MCF 10A (cell line): ENCODE measurements at regions of chr7 and their contacts with region 1.

Region 1: DNA sequence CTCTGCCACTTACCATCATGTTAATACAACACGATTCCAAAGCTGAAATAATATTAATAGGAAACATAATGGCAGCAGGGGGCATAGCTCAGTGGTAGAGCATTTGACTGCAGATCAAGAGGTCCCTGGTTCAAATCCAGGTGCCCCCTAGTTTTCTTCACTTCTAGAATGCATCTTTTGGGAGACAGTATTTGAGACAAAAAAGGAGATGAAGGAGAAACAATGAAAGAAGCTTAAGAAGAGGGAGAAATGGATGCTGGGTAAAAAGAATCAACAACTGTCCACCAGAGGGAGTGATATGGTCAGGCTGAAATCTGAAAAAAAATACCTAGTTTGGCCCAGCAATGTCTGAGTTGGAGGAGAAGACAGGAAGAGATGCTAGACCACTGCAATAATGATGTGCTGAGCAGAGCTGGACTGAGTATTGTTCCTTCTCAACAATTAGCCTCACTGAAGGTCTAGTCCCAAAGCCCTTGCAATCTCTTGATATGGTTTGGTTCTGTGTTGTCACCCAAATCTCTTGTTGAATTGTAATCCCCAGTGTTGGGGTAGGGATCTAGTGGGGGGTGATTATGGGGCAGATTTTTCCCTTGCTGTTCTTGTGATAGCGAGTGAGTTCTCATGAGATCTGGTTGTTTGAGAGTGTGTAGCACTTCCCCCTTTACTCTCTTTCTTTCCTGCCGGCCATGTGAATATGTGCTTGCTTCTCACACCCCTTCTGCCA is 48.3 kb downstream of the ZNF783 start:
- DNase-seq: peak; percentile 65
- H3K4me3 Mint-ChIP-seq: no peak overlapping the region
- H3K27ac Mint-ChIP-seq: no peak overlapping the region
- H3K4me1 Mint-ChIP-seq: no peaks in the 10 kb centered on the region
- H3K27me3 Mint-ChIP-seq: peaks cover 15% of the 10 kb centered on the region
- CTCF ChIP-seq: peak; percentile 57

Region 2: DNA sequence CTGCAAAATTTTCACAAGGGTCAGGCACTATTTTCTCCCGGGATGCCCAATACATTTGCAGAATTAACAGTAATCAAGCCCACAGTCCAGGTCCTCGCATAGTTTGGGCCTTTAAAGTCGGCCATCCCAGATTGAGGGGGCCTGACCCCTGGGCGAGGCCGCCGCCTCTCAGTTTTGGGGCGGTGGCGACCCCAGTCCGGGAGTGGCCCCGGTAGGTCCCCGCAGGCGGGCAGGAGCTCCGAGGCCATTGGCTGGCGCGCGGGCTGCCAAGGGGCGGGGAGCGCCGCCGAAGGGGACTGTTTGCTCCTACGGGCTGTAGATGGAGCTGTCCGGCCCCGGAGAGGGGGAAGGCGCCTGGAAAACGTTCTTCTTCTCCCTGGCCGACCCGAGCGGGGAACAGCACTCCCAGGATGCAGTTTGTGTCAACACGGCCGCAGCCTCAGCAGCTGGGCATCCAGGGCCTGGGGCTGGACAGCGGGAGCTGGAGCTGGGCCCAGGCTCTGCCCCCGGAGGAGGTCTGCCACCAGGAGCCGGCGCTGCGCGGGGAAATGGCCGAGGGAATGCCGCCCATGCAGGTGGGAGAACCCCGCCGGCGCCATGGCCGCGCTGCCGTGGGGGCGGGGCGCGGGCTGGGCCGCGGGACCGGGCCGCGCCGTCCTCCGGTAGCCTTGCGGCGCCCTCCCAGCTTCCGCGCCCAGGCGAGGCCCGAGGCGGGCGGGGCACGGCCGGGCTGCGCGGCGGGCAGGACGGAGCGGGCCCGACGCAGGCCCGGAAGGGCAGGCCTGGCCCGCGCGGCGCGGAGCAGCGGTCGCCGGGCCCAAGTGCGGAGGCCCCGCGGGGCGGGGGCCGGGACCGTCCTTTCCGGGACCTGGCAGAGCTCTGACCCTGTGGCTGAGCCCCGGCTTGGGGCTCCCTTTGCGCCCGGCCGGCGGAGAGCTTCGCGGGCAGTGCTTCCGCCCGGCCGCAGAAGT is 114.8 kb before region 1 on chr7 and contains the start of gene ZNF282:
- CTCF ChIA-PET with region 1: interaction called, 3 read pairs
- POLR2A ChIA-PET with region 1: no interaction called
- intact Hi-C with region 1: loop called (anchors 1 kb)
- DNase-seq: peak; percentile 93
- H3K4me3 Mint-ChIP-seq: peak within 1 kb of the TSS; percentile 85
- H3K27ac Mint-ChIP-seq: peak within 1 kb of the TSS; percentile 94
- H3K4me1 Mint-ChIP-seq: peaks cover 14% of the 10 kb centered on the region
- H3K27me3 Mint-ChIP-seq: no peaks in the 10 kb centered on the region
- CTCF ChIP-seq: peak; percentile 52
- total RNA-seq, gene ZNF282: 43.9 and 46.4 TPM in 2 replicates

Region 3: GRCh38 chr7:149404825-149405224 is 94.5 kb after region 1 on chr7:
- CTCF ChIA-PET with region 1: interaction called, 11 read pairs
- POLR2A ChIA-PET with region 1: no interaction called
- intact Hi-C with region 1: no loop called
- DNase-seq: no peak
- H3K4me3 Mint-ChIP-seq: no peak overlapping the region
- H3K27ac Mint-ChIP-seq: no peak overlapping the region
- H3K4me1 Mint-ChIP-seq: no peaks in the 10 kb centered on the region
- H3K27me3 Mint-ChIP-seq: peaks cover 33% of the 10 kb centered on the region
- CTCF ChIP-seq: no peak

Region 4: GRCh38 chr7:149422129-149422913 is 112.0 kb after region 1 on chr7:
- CTCF ChIA-PET with region 1: no interaction called
- POLR2A ChIA-PET with region 1: no interaction called
- intact Hi-C with region 1: loop called (anchors 5 kb)
- DNase-seq: peak; percentile 69
- H3K4me3 Mint-ChIP-seq: peak overlapping the region; percentile 61
- H3K27ac Mint-ChIP-seq: no peak overlapping the region
- H3K4me1 Mint-ChIP-seq: no peaks in the 10 kb centered on the region
- H3K27me3 Mint-ChIP-seq: no peaks in the 10 kb centered on the region
- CTCF ChIP-seq: peak; percentile 39

Region 5: DNA sequence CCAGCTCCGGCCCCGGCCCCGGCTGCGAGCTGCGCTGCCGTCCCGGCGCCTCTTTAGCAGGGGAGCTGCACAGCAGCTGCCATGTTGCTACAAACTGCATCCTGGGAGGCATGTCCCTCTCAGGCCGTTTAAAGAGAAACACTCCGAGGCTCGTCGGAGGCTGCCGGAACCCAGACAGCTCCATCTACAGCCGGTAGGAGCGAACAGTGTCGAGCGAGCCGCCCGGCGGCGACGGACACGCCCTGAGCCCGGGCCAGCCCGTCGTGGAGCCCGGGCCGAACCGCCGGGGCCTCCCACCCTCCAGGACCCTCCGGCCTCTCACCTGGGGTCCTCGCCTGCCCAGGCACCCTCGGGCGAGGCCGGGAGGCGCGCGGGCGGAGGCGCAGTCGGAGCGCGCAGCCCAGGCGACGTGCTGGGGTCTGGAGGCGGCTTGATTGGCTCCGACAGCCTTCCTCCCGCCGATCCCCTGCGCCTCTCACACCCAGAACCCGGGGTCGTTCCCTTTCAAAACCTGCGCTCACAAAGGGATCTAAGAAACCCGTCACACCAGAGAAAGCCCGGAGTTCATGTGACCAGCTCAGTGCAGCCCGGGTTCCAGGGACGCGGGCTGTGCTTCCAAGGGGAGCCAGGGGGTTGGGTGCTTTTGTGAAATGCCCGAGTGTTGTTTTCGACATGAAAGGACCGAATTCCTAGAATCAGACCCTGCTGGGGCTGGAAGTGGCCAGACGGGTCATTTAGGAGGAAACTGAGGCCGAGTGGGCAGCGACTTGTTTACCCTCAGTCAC is 150.4 kb after region 1 on chr7 and contains the start of gene ZNF777:
- CTCF ChIA-PET with region 1: interaction called, 9 read pairs
- POLR2A ChIA-PET with region 1: interaction called, 5 read pairs
- intact Hi-C with region 1: loop called (anchors 2 kb)
- DNase-seq: peak; percentile 84
- H3K4me3 Mint-ChIP-seq: peak within 1 kb of the TSS; percentile 72
- H3K27ac Mint-ChIP-seq: no peak within 1 kb of the TSS
- H3K4me1 Mint-ChIP-seq: peaks cover 16% of the 10 kb centered on the region
- H3K27me3 Mint-ChIP-seq: no peaks in the 10 kb centered on the region
- CTCF ChIP-seq: peak; percentile 36
- total RNA-seq, gene ZNF777: 19.5 and 22.9 TPM in 2 replicates

Region 6: GRCh38 chr7:149598721-149599306 is 288.5 kb after region 1 on chr7:
- CTCF ChIA-PET with region 1: interaction called, 9 read pairs
- POLR2A ChIA-PET with region 1: no interaction called
- intact Hi-C with region 1: loop called (anchors 5 kb)
- DNase-seq: peak; percentile 56
- H3K4me3 Mint-ChIP-seq: no peak overlapping the region
- H3K27ac Mint-ChIP-seq: peak overlapping the region; percentile 73
- H3K4me1 Mint-ChIP-seq: peaks cover 5% of the 10 kb centered on the region
- H3K27me3 Mint-ChIP-seq: no peaks in the 10 kb centered on the region
- CTCF ChIP-seq: peak; percentile 47